ENCODE measurements at regions of chr4 and their contacts with region 1.

Region 1: GRCh38 chr4:142353149-142353738 is 492.9 kb downstream of the INPP4B start:
- DNase-seq: no peak

Region 2: DNA sequence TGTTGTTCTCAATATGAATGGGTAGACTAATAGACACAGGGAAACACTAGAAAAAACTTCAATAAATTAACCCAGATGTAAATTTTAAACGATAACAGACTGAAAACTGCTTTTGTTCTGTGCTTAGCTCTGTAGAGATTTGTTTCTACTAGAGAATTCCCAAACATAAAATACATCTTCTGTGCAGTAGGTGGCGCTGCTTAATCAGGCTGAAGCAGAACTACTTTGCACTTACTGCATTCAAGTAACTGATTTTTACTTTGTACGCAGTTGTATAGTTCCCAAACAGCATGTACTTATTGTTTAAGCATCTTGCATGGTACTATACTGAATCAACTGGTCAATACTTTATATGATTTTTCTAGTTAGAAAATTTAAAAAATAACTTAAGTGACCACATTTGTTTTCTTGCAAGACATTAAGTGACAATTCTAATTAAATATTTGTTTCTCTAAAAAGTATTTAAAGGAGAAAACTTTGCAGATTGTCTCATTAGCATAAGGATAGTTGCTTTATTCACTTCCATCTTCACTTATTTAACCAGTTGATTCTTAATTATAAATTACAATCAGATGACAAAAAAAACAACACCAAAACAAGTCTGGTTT is 226.2 kb before region 1 on chr4:
- intact Hi-C with region 1: loop called (anchors 5 kb)
- DNase-seq: no peak

Region 3: DNA sequence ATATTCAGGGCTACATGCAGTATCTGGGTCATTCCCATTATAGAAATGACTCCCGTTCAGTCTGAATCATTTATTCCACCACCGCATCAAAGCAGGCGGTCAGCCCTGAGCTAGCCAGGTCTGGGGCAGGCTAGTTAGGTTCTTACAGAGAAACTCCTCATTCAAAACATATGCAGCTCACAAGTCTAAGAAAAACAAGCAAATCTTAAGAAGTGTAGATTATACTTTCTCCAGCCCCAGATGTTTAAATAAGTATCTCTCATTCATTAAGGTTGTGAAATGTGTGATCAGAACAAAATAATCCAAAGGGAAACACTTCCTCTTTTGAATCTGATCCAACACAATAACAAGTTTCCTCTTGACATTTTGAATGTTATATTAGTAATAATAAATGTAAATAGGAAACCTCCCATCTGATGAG is 51.0 kb after region 1 on chr4:
- intact Hi-C with region 1: loop called (anchors 5 kb)
- DNase-seq: no peak

Region 4: DNA sequence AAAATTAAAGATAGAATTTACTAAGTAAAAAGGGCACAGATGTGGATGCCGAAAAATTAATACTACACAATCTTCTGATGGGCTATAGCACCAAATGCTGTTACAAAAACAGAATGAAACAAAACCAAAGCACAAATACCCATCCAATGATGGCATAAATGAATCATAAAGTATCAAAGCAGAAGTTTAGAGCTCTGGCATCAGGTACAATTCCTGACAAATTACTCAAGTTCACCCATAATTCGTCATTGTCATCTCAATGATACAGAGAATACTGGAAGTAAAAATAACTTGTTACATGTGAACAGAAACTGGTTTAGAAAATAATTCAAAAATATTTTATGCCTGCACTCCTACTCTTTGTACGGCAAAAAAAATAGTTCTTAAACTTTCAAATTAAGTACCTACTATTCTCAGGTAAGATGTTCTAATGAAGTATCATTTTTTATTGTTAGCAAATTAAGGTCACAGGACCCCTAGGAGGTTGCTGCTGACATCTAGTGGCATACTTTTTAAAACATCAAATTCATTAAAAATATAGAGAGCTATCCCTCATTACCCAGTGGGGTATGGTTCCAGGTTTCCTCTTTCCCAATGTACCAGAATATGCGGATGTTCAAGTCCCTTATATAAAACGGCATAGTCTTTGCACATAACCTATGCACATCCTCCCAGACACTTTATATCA is 366.8 kb after region 1 on chr4:
- intact Hi-C with region 1: loop called (anchors 2 kb)
- DNase-seq: no peak

Region 5: DNA sequence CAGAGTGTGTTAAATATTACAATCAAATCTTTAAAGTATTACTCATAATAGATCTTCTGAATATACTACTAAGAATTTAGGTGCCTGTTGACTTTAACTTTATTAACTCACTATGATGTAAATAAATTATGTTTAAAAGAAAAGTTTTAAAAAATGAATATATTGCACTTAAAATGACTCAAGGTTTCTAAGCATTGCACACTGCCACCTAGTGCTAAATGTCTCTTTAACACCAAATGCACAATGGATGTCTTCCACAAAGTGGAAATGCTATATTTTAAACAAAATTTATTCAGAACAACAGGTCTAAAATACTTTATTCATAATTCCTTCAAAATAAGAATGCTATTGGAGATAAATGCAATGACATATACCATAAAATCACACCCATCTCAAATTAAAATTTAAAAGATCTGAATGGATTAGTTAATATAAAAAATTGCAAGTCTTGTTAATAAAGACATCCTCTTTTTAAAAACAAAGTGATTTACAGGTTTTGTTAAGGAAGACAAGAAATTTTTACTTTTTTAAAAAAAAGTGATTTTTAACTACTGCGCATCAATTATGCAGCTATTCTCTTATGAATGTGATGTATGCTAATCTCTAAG is 487.4 kb after region 1 on chr4:
- intact Hi-C with region 1: loop called (anchors 5 kb)
- DNase-seq: no peak

Region 6: GRCh38 chr4:142883040-142883832 is 530.0 kb after region 1 on chr4:
- intact Hi-C with region 1: no loop called
- DNase-seq: no peak